ENCODE measurements at regions of chr7 and their contacts with region 1.

Region 1: DNA sequence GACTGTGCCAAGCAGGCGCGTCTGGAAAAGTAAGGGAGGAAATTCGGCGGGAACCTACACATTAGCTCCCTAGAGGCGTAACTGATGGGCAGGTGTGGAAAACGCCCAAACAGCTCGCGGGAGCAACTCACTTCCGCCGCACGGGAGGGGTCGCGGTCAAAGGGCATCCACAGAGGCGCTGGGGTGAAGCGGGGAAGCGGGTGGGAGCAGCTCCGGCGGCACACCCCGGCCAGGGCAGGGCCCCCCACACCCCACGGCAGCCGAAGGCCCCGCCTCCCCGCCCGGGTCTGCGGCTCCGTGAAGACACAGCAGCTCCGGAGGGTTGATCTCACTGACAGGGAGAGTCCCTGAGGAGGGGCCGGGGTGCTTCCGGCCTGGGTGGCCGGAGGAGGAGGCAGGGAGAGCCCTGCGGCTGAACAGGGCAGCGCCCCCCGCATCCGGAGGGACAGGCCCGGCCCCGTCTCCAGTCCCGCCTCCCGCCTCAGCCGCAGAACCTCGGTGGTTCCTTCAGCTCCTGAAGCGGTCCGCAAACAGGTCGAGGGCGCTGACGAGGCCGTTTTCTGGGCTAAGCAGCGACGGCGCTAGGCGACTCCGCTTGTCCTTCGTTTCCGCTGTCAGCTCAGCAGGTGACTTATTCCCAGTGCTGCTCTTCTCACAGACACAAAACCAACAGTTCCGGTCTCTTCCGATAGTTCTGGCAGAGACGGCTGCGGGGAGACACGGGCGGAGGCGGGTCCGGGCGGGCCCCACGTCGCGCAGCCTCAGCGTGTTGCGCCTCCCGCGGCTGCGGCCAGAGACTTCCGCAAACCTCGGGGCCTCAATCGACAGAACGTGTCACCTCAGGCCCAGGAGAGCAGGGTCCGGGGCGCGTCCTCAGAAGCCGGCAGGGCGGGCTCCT is 276.1 kb downstream of the DNAJB6 start:
- DNase-seq: peak; percentile 77
- H3K4me3 Mint-ChIP-seq: peak overlapping the region; percentile 77
- H3K27ac Mint-ChIP-seq: peak overlapping the region; percentile 46
- H3K4me1 Mint-ChIP-seq: peaks cover 10% of the 10 kb centered on the region
- H3K27me3 Mint-ChIP-seq: no peaks in the 10 kb centered on the region

Region 2: DNA sequence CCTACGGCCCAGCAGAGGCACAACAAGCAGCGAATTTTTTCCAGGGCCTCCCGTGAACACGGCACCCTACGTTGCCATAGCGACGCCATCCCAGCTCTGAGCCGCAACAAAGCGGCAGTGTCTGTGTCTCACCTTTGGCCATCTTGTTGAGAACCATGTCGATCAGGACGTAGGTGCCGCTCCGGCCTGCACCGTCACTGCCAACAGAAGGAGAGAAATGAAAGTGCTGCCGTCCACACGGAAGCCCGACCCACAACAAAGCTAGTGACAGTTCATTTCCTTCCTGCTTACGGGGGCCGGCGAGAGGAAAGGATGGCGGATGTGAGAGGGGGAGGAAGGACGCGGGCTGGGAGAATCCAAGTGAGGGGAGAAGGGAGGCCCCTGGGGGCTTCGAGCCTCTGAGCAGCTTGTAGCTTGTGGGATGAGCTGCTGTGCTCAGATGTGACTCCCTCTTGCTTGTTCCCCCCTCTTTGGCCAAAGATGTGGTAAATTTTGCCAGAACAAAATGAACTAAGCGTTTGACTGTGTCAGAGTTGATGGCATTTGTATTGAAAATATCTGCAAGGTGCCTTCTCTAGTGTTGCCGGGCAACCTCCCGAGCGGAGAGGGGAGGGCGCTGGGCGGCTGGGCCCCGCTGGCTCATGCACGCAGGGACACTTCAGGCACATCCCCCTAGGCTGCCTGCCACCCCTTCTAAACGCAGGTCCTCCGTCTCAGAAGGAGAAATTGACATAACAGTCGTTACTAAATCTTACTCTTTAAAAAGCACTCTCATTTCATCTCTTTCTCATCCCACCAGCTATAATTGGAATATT is 43.9 kb before region 1 on chr7:
- CTCF ChIA-PET with region 1: no interaction called
- intact Hi-C with region 1: loop called (anchors 2 kb)
- DNase-seq: peak; percentile 76
- H3K4me3 Mint-ChIP-seq: peak overlapping the region; percentile 84
- H3K27ac Mint-ChIP-seq: peak overlapping the region; percentile 57
- H3K4me1 Mint-ChIP-seq: peaks cover 20% of the 10 kb centered on the region
- H3K27me3 Mint-ChIP-seq: no peaks in the 10 kb centered on the region

Region 3: GRCh38 chr7:157576440-157576886 is 36.5 kb before region 1 on chr7:
- CTCF ChIA-PET with region 1: no interaction called
- intact Hi-C with region 1: loop called (anchors 2 kb)
- DNase-seq: peak; percentile 79
- H3K4me3 Mint-ChIP-seq: peak overlapping the region; percentile 73
- H3K27ac Mint-ChIP-seq: peak overlapping the region; percentile 63
- H3K4me1 Mint-ChIP-seq: peaks cover 23% of the 10 kb centered on the region
- H3K27me3 Mint-ChIP-seq: no peaks in the 10 kb centered on the region

Region 4: GRCh38 chr7:157625973-157626742 is 13.2 kb after region 1 on chr7:
- CTCF ChIA-PET with region 1: interaction called, 4 read pairs
- intact Hi-C with region 1: loop called (anchors 1 kb)
- DNase-seq: no peak
- H3K4me3 Mint-ChIP-seq: peak overlapping the region; percentile 19
- H3K27ac Mint-ChIP-seq: peak overlapping the region; percentile 77
- H3K4me1 Mint-ChIP-seq: peaks cover 80% of the 10 kb centered on the region
- H3K27me3 Mint-ChIP-seq: no peaks in the 10 kb centered on the region

Region 5: GRCh38 chr7:157863906-157864803 is 251.2 kb after region 1 on chr7:
- CTCF ChIA-PET with region 1: no interaction called
- intact Hi-C with region 1: no loop called
- DNase-seq: no peak
- H3K4me3 Mint-ChIP-seq: no peak overlapping the region
- H3K27ac Mint-ChIP-seq: no peak overlapping the region
- H3K4me1 Mint-ChIP-seq: peaks cover 4% of the 10 kb centered on the region
- H3K27me3 Mint-ChIP-seq: no peaks in the 10 kb centered on the region

Region 6: GRCh38 chr7:157875230-157876179 is 262.6 kb after region 1 on chr7:
- CTCF ChIA-PET with region 1: no interaction called
- intact Hi-C with region 1: loop called (anchors 5 kb)
- DNase-seq: peak; percentile 68
- H3K4me3 Mint-ChIP-seq: peak overlapping the region; percentile 60
- H3K27ac Mint-ChIP-seq: peak overlapping the region; percentile 21
- H3K4me1 Mint-ChIP-seq: peaks cover 41% of the 10 kb centered on the region
- H3K27me3 Mint-ChIP-seq: no peaks in the 10 kb centered on the region

Measured in activated naive CD4-positive, alpha-beta T cell treated with anti-CD3 and anti-CD28 coated beads for 36 hours (primary cell).